ENCODE measurements at regions of chr6 and their contacts with region 1.

Region 1: DNA sequence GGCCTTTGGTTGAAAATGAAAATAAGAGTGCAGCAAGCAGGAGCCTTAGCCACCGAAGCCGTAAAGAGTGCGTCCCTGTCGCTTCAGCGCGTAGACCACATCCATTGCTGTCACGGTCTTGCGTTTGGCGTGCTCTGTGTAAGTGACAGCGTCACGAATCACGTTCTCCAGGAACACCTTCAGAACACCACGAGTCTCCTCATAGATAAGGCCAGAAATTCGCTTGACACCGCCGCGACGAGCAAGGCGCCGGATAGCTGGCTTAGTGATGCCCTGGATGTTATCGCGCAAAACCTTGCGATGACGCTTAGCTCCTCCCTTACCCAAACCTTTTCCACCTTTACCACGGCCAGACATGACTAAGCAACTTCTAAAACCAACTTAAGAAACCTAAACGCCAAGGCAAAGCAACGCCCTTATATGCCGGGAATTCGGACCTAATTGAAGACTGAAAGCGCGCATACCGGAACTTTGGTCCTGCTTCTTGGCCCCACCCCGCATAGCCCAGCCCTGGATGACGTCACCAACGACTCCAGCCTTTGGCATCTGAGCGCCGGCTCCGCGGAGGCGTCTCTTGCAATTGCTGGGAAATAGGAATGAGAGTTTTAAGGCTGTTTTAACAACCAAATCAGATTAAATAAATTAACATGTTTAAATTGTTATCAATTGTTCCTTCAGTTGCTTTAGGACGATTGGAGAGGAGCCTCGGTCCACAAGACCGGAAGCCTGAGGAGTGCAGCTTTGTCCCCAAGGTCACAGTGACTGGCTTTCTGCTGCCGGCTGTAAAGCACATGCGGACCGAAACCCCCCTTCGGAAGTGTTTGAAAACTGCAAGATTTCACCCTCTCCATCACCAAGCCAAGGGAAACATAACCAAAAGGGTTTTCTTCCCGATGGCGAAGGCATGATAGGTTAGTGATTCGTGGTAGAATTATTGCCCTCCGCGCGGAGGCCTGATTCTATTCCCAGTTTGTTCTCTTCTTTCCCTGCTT is 79.6 kb upstream of the BTN3A2 start:
- DNase-seq: peak; percentile 99
- ATAC-seq: peak; percentile 76
- H3K4me3 ChIP-seq: peak overlapping the region; percentile 52 to 99 (median 71)
- H3K4me3 Mint-ChIP-seq: peak overlapping the region; percentile 90
- H3K27ac ChIP-seq: peak overlapping the region; percentile 93 to 97
- H3K27ac Mint-ChIP-seq: peak overlapping the region; percentile 95
- H3K4me1 ChIP-seq: peaks cover 17 to 18% of the 10 kb centered on the region in 2 donors
- H3K4me1 Mint-ChIP-seq: peaks cover 33% of the 10 kb centered on the region
- H3K27me3 ChIP-seq: no peaks in the 10 kb centered on the region
- H3K27me3 Mint-ChIP-seq: peaks cover 3% of the 10 kb centered on the region
- CTCF ChIP-seq: no peak

Region 2: DNA sequence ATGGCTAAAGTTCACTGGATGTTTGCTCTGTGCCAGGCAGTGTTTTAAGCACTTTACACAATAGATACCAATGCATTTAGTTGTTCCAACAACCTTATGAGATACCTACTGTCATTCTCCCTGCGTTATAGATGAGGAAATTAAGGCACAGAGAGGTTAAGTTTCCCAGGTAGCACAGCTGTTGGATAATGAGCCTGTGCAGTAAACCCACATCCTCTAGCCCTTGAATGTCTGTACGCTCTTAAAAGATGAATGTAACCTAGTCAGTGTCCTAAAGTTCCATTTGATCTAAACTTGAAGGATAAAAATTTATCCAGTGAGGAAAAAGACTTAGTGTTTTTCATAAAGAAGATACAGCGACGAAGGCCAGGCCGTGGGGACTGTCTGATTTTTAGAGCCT is 170.2 kb before region 1 on chr6:
- CTCF ChIA-PET with region 1: no interaction called
- POLR2A ChIA-PET with region 1: no interaction called
- intact Hi-C with region 1: no loop called
- DNase-seq: no peak
- ATAC-seq: no peak
- H3K4me3 ChIP-seq: no peak overlapping the region
- H3K4me3 Mint-ChIP-seq: no peak overlapping the region
- H3K27ac ChIP-seq: no peak overlapping the region
- H3K27ac Mint-ChIP-seq: no peak overlapping the region
- H3K4me1 ChIP-seq: no peaks in the 10 kb centered on the region
- H3K4me1 Mint-ChIP-seq: no peaks in the 10 kb centered on the region
- H3K27me3 ChIP-seq: no peaks in the 10 kb centered on the region
- H3K27me3 Mint-ChIP-seq: no peaks in the 10 kb centered on the region
- CTCF ChIP-seq: no peak

Region 3: DNA sequence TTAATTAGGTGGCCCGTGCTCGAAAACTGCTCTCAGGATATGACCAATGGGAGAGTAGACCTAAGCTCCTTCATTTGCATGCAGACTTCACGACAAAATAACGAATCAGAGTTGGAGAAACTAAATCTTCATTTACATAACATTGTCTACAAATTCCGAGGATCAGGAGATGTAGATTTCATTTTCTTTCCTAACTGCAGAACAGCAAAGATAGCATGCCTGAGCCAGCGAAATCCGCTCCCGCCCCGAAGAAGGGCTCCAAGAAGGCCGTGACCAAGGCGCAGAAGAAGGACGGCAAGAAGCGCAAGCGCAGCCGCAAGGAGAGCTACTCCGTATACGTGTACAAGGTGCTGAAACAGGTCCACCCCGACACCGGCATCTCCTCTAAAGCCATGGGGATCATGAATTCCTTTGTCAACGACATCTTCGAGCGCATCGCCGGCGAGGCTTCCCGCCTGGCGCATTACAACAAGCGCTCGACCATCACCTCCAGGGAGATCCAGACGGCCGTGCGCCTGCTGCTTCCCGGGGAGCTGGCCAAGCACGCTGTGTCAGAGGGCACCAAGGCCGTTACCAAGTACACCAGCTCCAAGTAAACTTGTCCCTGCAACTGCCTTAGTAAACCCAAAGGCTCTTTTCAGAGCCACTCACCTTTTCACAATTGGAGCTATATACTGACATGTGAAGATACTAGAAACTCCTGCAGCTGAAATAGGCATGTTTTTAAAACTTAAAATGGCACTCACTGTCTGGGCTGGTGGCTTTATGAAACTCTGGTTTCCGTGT is 101.7 kb before region 1 on chr6:
- CTCF ChIA-PET with region 1: interaction called, 3 read pairs
- POLR2A ChIA-PET with region 1: interaction called, 17 read pairs
- intact Hi-C with region 1: no loop called
- DNase-seq: peak; percentile 84
- ATAC-seq: peak; percentile 89
- H3K4me3 ChIP-seq: peak overlapping the region; percentile 51 to 73 (median 71)
- H3K4me3 Mint-ChIP-seq: peak overlapping the region; percentile 91
- H3K27ac ChIP-seq: peak overlapping the region in 1 of 2 donors; percentile 61
- H3K27ac Mint-ChIP-seq: peak overlapping the region; percentile 85
- H3K4me1 ChIP-seq: peaks cover 13 to 22% of the 10 kb centered on the region in 2 donors
- H3K4me1 Mint-ChIP-seq: peaks cover 25% of the 10 kb centered on the region
- H3K27me3 ChIP-seq: no peaks in the 10 kb centered on the region
- H3K27me3 Mint-ChIP-seq: no peaks in the 10 kb centered on the region
- CTCF ChIP-seq: no peak

Region 4: DNA sequence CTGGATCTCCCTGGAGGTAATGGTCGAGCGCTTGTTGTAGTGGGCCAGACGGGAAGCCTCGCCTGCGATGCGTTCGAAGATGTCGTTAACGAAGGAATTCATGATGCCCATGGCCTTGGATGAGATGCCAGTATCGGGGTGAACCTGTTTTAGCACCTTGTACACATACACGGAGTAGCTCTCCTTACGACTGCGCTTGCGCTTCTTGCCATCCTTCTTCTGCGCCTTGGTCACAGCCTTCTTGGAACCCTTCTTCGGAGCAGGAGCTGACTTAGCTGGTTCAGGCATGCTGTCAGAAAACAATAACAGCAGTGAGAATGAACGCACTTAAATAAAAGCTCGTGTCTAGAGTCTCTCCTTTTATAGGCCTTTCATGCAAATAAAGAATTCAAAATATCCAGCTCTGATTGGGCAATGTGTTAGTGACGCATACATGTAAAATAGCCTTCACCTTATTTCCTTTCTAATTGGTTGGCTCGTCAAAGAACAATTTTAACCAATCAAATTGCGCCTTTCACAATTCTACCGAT is 69.0 kb before region 1 on chr6:
- CTCF ChIA-PET with region 1: interaction called, 6 read pairs
- POLR2A ChIA-PET with region 1: interaction called, 48 read pairs
- intact Hi-C with region 1: loop called (anchors 1 kb)
- DNase-seq: peak; percentile 96
- ATAC-seq: peak; percentile 80
- H3K4me3 ChIP-seq: peak overlapping the region; percentile 70 to 93 (median 74)
- H3K4me3 Mint-ChIP-seq: no peak overlapping the region
- H3K27ac ChIP-seq: peak overlapping the region; percentile 81 to 82
- H3K27ac Mint-ChIP-seq: no peak overlapping the region
- H3K4me1 ChIP-seq: peaks cover 15 to 26% of the 10 kb centered on the region in 2 donors
- H3K4me1 Mint-ChIP-seq: peaks cover 19% of the 10 kb centered on the region
- H3K27me3 ChIP-seq: no peaks in the 10 kb centered on the region
- H3K27me3 Mint-ChIP-seq: no peaks in the 10 kb centered on the region
- CTCF ChIP-seq: no peak

Region 5: GRCh38 chr6:26240154-26241032 is 45.0 kb before region 1 on chr6:
- CTCF ChIA-PET with region 1: no interaction called
- POLR2A ChIA-PET with region 1: interaction called, 17 read pairs
- intact Hi-C with region 1: loop called (anchors 1 kb)
- DNase-seq: peak; percentile 91
- ATAC-seq: peak; percentile 80
- H3K4me3 ChIP-seq: peak overlapping the region; percentile 55 to 87 (median 67)
- H3K4me3 Mint-ChIP-seq: peak overlapping the region; percentile 87
- H3K27ac ChIP-seq: peak overlapping the region; percentile 76 to 93
- H3K27ac Mint-ChIP-seq: peak overlapping the region; percentile 94
- H3K4me1 ChIP-seq: peaks cover 6 to 16% of the 10 kb centered on the region in 2 donors
- H3K4me1 Mint-ChIP-seq: peaks cover 20% of the 10 kb centered on the region
- H3K27me3 ChIP-seq: no peaks in the 10 kb centered on the region
- H3K27me3 Mint-ChIP-seq: no peaks in the 10 kb centered on the region
- CTCF ChIP-seq: no peak

Region 6: GRCh38 chr6:26304797-26305640 is 19.6 kb after region 1 on chr6:
- CTCF ChIA-PET with region 1: no interaction called
- POLR2A ChIA-PET with region 1: interaction called, 10 read pairs
- intact Hi-C with region 1: loop called (anchors 1 kb)
- DNase-seq: peak; percentile 84
- ATAC-seq: peak; percentile 83
- H3K4me3 ChIP-seq: peak overlapping the region; percentile 57 to 88 (median 85)
- H3K4me3 Mint-ChIP-seq: peak overlapping the region; percentile 96
- H3K27ac ChIP-seq: peak overlapping the region; percentile 58 to 81
- H3K27ac Mint-ChIP-seq: peak overlapping the region; percentile 95
- H3K4me1 ChIP-seq: peaks cover 5 to 9% of the 10 kb centered on the region in 2 donors
- H3K4me1 Mint-ChIP-seq: peaks cover 15% of the 10 kb centered on the region
- H3K27me3 ChIP-seq: no peaks in the 10 kb centered on the region
- H3K27me3 Mint-ChIP-seq: no peaks in the 10 kb centered on the region
- CTCF ChIP-seq: no peak

Region 7: GRCh38 chr6:26537846-26538571 is 252.6 kb after region 1 on chr6 and contains the start of gene HMGN4:
- CTCF ChIA-PET with region 1: no interaction called
- POLR2A ChIA-PET with region 1: interaction called, 5 read pairs
- intact Hi-C with region 1: loop called (anchors 1 kb)
- DNase-seq: peak; percentile 97
- ATAC-seq: peak; percentile 68
- H3K4me3 ChIP-seq: peak within 1 kb of the TSS; percentile 89 to 98 (median 92)
- H3K4me3 Mint-ChIP-seq: peak within 1 kb of the TSS; percentile 96
- H3K27ac ChIP-seq: peak within 1 kb of the TSS; percentile 84 to 94
- H3K27ac Mint-ChIP-seq: peak within 1 kb of the TSS; percentile 99
- H3K4me1 ChIP-seq: peaks cover 29 to 35% of the 10 kb centered on the region in 2 donors
- H3K4me1 Mint-ChIP-seq: peaks cover 56% of the 10 kb centered on the region
- H3K27me3 ChIP-seq: no peaks in the 10 kb centered on the region
- H3K27me3 Mint-ChIP-seq: peaks cover 3% of the 10 kb centered on the region
- CTCF ChIP-seq: peak; percentile 8
- total RNA-seq, gene HMGN4: 81.1 and 82.4 TPM in 2 replicates

Region 8: GRCh38 chr6:27177485-27178406 is 892.3 kb after region 1 on chr6:
- CTCF ChIA-PET with region 1: no interaction called
- POLR2A ChIA-PET with region 1: no interaction called
- intact Hi-C with region 1: loop called (anchors 1 kb)
- DNase-seq: peak; percentile 90
- ATAC-seq: peak; percentile 86
- H3K4me3 ChIP-seq: peak overlapping the region; percentile 88 to 100 (median 98)
- H3K4me3 Mint-ChIP-seq: peak overlapping the region; percentile 96
- H3K27ac ChIP-seq: peak overlapping the region; percentile 34 to 78
- H3K27ac Mint-ChIP-seq: peak overlapping the region; percentile 91
- H3K4me1 ChIP-seq: peaks cover 0 to 7% of the 10 kb centered on the region in 2 donors
- H3K4me1 Mint-ChIP-seq: peaks cover 15% of the 10 kb centered on the region
- H3K27me3 ChIP-seq: no peaks in the 10 kb centered on the region
- H3K27me3 Mint-ChIP-seq: no peaks in the 10 kb centered on the region
- CTCF ChIP-seq: peak; percentile 71